A549 (cell line): ENCODE measurements at regions of chr7 and their contacts with region 1.

Region 1: GRCh38 chr7:101138213-101138870 is 11.4 kb downstream of the SERPINE1 start:
- DNase-seq: peak; percentile 75 to 96
- ATAC-seq: peak; percentile 39 to 73
- H3K4me3 ChIP-seq: no peak overlapping the region
- H3K27ac ChIP-seq: peak overlapping the region; percentile 79 to 88
- H3K4me1 ChIP-seq: peaks cover 57% of the 10 kb centered on the region
- CTCF ChIP-seq: peak; percentile 95
- EP300 ChIP-seq: peak; percentile 28 to 65; a peak in 3 of 5 replicates
- POLR2A ChIP-seq: no peak
- RAD21 ChIP-seq: peak; percentile 57 to 90

Region 2: GRCh38 chr7:100991631-100992030 is 146.7 kb before region 1 on chr7:
- CTCF ChIA-PET with region 1: no interaction called
- POLR2A ChIA-PET with region 1: no interaction called
- DNase-seq: no peak
- ATAC-seq: no peak
- H3K4me3 ChIP-seq: no peak overlapping the region
- H3K27ac ChIP-seq: no peak overlapping the region
- H3K4me1 ChIP-seq: no peaks in the 10 kb centered on the region
- CTCF ChIP-seq: no peak
- EP300 ChIP-seq: no peak
- POLR2A ChIP-seq: no peak
- RAD21 ChIP-seq: no peak

Region 3: GRCh38 chr7:101077303-101078089 is 60.8 kb before region 1 on chr7:
- CTCF ChIA-PET with region 1: interaction called, 15 read pairs
- POLR2A ChIA-PET with region 1: no interaction called
- DNase-seq: peak; percentile 78 to 85
- ATAC-seq: peak; percentile 99 to 100
- H3K4me3 ChIP-seq: no peak overlapping the region
- H3K27ac ChIP-seq: 0 out of 6 replicates have a peak overlapping the region, but pooled peaks of 1 of the 2 experiments have one; percentile 12
- H3K4me1 ChIP-seq: no peaks in the 10 kb centered on the region
- CTCF ChIP-seq: peak; percentile 91
- EP300 ChIP-seq: no peak
- POLR2A ChIP-seq: no peak
- RAD21 ChIP-seq: peak; percentile 89 to 96

Region 4: GRCh38 chr7:101153969-101154692 is 15.8 kb after region 1 on chr7 and contains the start of gene AP1S1:
- CTCF ChIA-PET with region 1: interaction called, 235 read pairs
- POLR2A ChIA-PET with region 1: interaction called, 3 read pairs
- DNase-seq: peak; percentile 96 to 97
- ATAC-seq: peak; percentile 89 to 94
- H3K4me3 ChIP-seq: peak within 1 kb of the TSS; percentile 91
- H3K27ac ChIP-seq: peak within 1 kb of the TSS; percentile 93 to 100
- H3K4me1 ChIP-seq: peaks cover 36% of the 10 kb centered on the region
- CTCF ChIP-seq: no peak
- EP300 ChIP-seq: no peak
- POLR2A ChIP-seq: peak; percentile 52
- RAD21 ChIP-seq: no peak
- polyA plus RNA-seq, gene AP1S1: 107 and 128 TPM in 2 replicates

Region 5: DNA sequence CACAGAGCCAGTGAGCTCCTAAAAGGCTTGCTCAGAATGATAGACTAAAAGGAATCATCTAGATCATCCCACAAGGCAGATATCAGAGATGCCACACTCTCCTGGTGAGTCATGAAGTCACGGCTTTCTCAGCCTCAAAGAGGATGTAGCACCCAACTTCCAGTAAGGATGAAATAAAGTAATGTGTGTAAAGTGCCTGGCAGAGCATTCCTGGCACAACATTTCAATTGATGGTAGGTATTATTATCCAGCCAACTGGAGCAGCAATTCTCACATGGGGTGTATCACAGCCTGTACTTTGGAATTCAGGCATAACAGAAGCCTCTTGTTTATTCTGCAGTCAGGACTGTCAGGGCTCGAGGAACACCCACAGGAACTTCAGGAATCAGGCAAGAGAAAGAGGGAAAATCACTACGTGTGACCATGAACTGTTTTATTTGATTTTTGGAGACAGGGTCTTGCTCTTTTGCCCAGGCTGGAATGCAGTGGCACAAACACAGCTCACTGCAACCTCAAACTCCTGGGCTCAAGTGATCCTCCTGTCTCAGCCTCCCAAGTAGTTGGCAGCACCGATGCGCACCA is 47.0 kb after region 1 on chr7:
- CTCF ChIA-PET with region 1: interaction called, 318 read pairs
- POLR2A ChIA-PET with region 1: no interaction called
- DNase-seq: peak in 1 of 2 experiments; percentile 68
- ATAC-seq: peak; percentile 34 to 71
- H3K4me3 ChIP-seq: no peak overlapping the region
- H3K27ac ChIP-seq: peak overlapping the region in 1 of 2 experiments; percentile 7; a peak in 2 of 6 replicates
- H3K4me1 ChIP-seq: peaks cover 20% of the 10 kb centered on the region
- CTCF ChIP-seq: no peak
- EP300 ChIP-seq: no peak
- POLR2A ChIP-seq: no peak
- RAD21 ChIP-seq: no peak

Region 6: DNA sequence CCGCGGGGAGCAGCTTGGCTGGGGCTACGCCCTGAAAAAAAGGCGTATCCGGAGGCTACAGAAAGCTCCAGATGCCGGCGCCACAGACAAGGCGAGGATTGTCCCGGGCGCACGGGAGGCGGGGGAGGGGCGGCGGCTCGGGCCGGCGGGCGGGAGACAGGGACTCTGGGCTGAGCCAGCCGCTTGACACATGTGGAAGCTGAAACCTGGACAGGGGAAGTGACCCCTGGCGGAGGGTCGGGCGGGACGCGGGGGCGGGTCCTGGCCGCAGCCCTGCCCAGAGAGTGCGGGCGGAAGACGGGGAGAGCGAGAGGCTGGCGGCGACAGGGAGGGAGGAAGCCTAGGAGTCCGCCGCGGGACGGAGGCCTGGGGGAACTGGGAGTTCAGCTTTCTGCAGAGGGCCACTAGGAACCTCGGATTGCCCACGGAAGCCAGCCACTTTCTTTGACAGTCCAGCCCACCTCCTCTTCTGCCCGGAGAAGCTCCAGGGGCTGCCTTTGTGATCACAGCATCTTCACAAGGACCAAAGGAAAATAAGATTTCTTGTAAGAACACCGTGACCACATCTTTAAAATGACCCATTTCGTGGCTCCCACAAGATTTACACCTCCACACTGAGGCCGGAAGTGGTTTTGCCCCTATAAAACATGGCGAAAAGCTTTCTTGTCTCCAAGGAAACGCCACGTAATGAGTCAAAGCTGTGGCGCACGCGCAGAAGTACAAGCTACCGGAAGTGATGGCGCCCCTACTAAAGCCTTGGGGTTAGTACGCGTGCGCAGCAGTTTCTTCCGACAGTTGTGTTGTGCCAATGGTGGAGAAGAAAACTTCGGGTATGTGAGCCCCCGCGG is 79.3 kb after region 1 on chr7 and contains the starts of genes PLOD3 and ZNHIT1:
- CTCF ChIA-PET with region 1: interaction called, 20 read pairs
- POLR2A ChIA-PET with region 1: no interaction called
- DNase-seq: peak; percentile 98 to 100
- ATAC-seq: peak; percentile 92 to 94
- H3K4me3 ChIP-seq: peak within 1 kb of the TSS; percentile 97
- H3K27ac ChIP-seq: peak within 1 kb of the TSS; percentile 90 to 98
- H3K4me1 ChIP-seq: peaks cover 17% of the 10 kb centered on the region
- CTCF ChIP-seq: no peak; the same call in 1 of the 3 replicates
- EP300 ChIP-seq: no peak
- POLR2A ChIP-seq: peak; percentile 73
- RAD21 ChIP-seq: no peak; a peak in 1 of 5 replicates
- polyA plus RNA-seq, gene PLOD3: 21.1 and 26.0 TPM in 2 replicates
- polyA plus RNA-seq, gene ZNHIT1: 29.5 and 33.2 TPM in 2 replicates

Region 7: GRCh38 chr7:101287032-101287431 is 148.7 kb after region 1 on chr7:
- CTCF ChIA-PET with region 1: interaction called, 101 read pairs
- POLR2A ChIA-PET with region 1: no interaction called
- DNase-seq: no peak
- ATAC-seq: no peak
- H3K4me3 ChIP-seq: no peak overlapping the region
- H3K27ac ChIP-seq: no peak overlapping the region
- H3K4me1 ChIP-seq: 0 out of 3 replicates have a peak, but pooled peaks cover 2% of the 10 kb centered on the region
- CTCF ChIP-seq: no peak
- EP300 ChIP-seq: no peak
- POLR2A ChIP-seq: no peak
- RAD21 ChIP-seq: no peak